Dorsolateral prefrontal cortex (tissue), 120 donors: ENCODE measurements at regions of chr1 and their contacts with region 1.

Region 1: GRCh38 chr1:52365746-52366516 is at the start of gene CC2D1B:
- DNase-seq: peak; percentile 87 to 98 (median 92)
- H3K4me3 ChIP-seq: peak within 1 kb of the TSS; percentile 66 to 99 (median 94)
- H3K27ac ChIP-seq: peak within 1 kb of the TSS; percentile 55 to 98 (median 92)
- H3K27me3 ChIP-seq: no peaks in the 10 kb centered on the region
- CTCF ChIP-seq: peak in 45 of 56 donors; percentile 10 to 61 (median 40)
- total RNA-seq, gene CC2D1B: 15.7 to 56.7 (median 29.3) TPM

Region 2: DNA sequence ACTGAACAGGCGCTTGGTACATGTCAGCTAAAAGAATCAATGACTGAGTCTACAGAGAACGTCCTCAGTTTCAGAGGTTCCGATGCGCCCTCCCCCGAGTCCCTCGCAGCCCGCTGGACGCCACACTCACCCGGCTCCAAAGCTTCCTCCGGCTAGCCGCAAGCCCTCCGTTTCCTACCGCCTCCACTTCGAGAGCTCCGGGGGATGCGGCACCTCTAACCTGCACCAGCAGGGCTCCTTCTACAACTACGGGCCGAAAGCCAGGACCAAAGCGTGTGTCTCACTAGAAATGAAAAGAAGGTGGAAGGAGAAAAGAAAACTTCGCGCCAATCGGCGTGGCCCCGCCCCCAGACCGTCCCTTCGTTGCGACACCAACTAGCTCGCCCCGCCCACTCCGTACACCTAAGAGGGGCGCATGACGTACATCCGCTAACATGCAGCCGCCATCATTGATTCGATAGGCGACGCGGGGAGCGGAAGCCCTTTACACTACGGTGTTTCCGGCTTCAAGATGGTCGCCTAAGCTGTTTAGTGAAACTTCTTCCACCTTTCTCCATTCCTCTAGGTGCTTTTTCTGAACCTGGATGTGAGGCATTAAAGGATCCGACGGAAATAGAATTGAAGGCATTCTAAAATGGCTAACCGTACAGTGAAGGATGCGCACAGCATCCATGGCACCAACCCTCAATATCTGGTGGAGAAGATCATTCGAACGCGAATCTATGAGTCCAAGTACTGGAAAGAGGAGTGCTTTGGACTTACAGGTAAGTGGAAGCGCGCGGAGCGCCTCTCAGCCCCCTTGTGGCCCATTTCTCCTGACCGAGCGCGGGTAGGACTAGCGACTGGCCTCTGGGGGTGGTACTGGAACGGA is 38.4 kb after region 1 on chr1 and contains the starts of genes ORC1 and PRPF38A:
- intact Hi-C with region 1: loop called in 1 of 2 experiments (anchors 2 kb)
- DNase-seq: peak; percentile 96 to 99 (median 98)
- H3K4me3 ChIP-seq: peak within 1 kb of the TSS; percentile 31 to 99 (median 90)
- H3K27ac ChIP-seq: peak within 1 kb of the TSS in 57 of 59 donors; percentile 20 to 96 (median 85)
- H3K27me3 ChIP-seq: no peaks in the 10 kb centered on the region
- CTCF ChIP-seq: peak in 44 of 56 donors; percentile 8 to 56 (median 38)
- total RNA-seq, gene ORC1: 0.17 to 1.3 (median 0.44) TPM in 115 of 120 experiments, not detected in the others
- total RNA-seq, gene PRPF38A: 30.5 to 72.7 (median 39.3) TPM

Region 3: DNA sequence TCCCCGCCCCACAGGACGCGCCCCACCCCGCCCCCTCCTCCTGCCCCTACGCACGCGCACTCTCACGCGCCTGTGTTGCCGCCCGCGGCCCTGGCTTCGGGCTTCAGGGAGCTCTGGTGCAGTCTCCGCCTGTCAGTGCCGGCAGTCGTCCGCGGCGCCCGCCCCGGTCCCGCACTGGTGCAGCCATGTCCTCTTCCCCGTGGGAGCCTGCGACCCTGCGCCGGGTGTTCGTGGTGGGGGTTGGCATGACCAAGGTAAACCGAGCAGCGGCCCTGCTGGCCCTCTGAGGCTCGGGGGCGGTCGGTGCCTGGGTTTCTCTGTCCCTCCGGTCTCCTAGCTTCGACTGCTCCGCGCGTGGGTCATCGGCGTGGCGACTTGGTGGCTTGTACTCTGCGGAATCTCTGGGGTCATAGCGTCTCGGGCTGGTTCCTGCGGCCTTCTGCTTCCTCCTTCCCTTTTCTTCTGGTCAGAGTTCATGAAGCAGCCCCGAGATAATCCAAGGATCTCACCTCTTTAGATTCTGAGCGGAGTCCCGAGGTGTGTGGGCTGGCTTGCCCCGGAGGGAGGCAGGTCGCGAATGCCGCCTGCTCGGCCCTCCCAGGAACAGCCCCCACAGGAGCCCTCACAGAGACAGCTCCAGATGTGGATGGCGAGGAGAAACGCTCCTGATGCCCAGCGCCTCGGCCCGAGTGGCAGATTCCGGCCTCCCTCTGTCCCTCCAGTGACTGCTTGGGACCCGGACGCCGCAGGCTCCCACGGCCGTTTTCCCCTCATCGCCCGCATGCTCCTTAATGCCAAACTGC is 561.5 kb after region 1 on chr1 and contains the start of gene SCP2:
- intact Hi-C with region 1: loop called in 1 of 2 experiments (anchors 10 kb)
- DNase-seq: peak; percentile 55 to 89 (median 72)
- H3K4me3 ChIP-seq: peak within 1 kb of the TSS; percentile 60 to 95 (median 81)
- H3K27ac ChIP-seq: peak within 1 kb of the TSS in 57 of 59 donors; percentile 14 to 92 (median 81)
- H3K27me3 ChIP-seq: peaks cover 0 to 15% (median 0%) of the 10 kb centered on the region in 45 donors
- CTCF ChIP-seq: peak in 5 of 56 donors; percentile 6 to 30 (median 8)
- total RNA-seq, gene SCP2: 53.5 to 119 (median 87.1) TPM